ENCODE measurements at regions of chr16 and their contacts with region 1.

Region 1: GRCh38 chr16:72013389-72013788 is 4.8 kb downstream of the DHODH start:
- DNase-seq: no peak
- H3K4me3 ChIP-seq: no peak overlapping the region
- H3K27ac ChIP-seq: no peak overlapping the region
- H3K4me1 ChIP-seq: no peaks in the 10 kb centered on the region
- H3K27me3 ChIP-seq: no peaks in the 10 kb centered on the region
- CTCF ChIP-seq: no peak

Region 2: DNA sequence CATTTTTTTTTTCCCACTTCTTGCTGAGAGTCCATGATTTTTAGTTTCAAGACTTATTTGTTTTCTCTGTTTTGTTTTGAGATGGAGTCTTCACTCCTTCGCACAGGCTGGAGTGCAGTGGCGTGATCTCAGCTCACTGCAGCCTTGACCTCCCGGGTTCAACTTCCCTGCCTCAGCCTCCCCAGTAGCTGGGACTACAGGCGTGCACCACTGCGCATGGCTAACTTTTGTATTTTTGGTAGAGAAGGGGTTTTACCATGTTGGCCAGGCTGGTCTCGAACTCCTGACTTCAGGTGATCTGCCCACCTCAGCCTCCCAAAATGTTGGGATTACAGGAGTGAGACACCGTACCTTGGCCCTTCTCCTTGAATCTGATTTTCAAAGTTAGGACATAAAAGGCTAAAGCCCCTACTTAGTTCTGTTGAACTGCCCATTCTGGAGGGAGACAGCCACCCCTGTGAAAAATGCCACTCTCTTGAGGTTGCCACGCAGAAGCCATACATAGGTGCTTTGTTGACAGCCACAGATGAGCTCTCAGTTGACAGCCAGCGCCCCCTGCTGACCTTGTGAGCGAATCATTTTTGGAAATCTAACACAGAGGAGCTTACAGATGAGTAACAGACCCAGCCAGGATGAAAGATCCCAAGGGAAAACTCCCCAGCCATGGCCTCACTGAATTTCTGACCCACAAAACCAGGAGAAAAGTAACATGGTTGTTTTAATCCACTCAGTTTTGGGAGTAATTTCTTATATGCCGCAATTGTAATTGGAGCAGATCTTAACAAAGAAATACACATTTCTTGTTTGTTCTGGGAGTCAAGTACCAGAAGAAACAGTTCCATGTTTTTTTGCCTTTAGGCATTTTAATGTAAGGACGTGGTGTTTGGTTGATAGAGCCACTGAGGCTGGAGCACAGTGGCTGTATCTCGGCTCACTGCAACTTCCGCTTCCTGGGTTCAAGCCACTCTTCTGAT is 52.0 kb before region 1 on chr16:
- intact Hi-C with region 1: no loop called
- DNase-seq: peak; percentile 87
- H3K4me3 ChIP-seq: no peak overlapping the region
- H3K27ac ChIP-seq: no peak overlapping the region
- H3K4me1 ChIP-seq: no peaks in the 10 kb centered on the region
- H3K27me3 ChIP-seq: no peaks in the 10 kb centered on the region
- CTCF ChIP-seq: peak; percentile 61

Region 3: DNA sequence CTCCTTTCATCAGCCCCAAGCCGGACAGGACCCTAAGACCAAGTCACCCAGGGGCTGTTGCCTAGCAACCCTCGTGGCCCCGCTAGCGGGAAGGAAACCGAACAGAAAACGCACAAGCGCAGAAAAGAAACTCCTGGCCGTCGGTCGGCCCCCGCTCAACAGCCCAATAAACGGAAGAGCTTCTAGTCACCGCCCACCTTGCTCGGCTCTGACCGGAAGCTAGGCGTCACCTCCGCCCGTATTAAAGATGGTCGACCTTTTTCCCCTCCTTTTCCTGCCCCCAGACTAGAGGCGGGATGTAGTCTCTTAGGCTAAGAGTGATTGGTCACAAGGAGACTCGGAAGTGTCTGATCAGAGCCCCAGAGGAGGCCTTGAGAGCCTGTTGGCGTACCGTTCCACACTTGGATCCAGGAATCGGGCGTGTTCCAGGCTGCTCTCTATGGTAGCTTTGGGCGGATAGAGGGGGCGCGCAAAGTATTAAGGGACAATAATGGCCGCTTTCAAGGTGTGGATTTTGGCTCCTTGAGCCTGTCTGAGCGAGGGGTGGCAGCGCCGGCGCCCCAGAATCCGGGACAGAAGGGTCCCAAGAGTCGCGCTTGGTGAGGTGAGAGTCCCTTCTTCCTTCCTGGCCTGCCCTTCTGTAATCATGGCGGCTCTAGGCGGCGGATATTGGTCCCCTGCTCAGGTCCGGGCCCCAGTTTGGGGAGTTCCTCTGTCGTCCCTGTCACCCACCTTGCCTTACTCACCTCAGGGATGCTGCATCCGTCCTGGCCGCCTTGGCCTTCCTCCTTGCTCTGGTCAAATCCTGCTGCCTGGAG is 80.3 kb after region 1 on chr16 and contains the starts of genes DHX38 and TXNL4B:
- intact Hi-C with region 1: loop called (anchors 5 kb)
- DNase-seq: peak; percentile 96
- H3K4me3 ChIP-seq: peak within 1 kb of the TSS; percentile 90
- H3K27ac ChIP-seq: peak within 1 kb of the TSS; percentile 82
- H3K4me1 ChIP-seq: peaks cover 11% of the 10 kb centered on the region
- H3K27me3 ChIP-seq: no peaks in the 10 kb centered on the region
- CTCF ChIP-seq: no peak
- total RNA-seq, gene DHX38: 41.7 to 79.3 TPM
- total RNA-seq, gene TXNL4B: 10.1 to 13.7 TPM

Measured in colonic mucosa (tissue), 4 donors.